OCI-LY7 (cell line): ENCODE measurements at regions of chr9 and their contacts with region 1.

Region 1: DNA sequence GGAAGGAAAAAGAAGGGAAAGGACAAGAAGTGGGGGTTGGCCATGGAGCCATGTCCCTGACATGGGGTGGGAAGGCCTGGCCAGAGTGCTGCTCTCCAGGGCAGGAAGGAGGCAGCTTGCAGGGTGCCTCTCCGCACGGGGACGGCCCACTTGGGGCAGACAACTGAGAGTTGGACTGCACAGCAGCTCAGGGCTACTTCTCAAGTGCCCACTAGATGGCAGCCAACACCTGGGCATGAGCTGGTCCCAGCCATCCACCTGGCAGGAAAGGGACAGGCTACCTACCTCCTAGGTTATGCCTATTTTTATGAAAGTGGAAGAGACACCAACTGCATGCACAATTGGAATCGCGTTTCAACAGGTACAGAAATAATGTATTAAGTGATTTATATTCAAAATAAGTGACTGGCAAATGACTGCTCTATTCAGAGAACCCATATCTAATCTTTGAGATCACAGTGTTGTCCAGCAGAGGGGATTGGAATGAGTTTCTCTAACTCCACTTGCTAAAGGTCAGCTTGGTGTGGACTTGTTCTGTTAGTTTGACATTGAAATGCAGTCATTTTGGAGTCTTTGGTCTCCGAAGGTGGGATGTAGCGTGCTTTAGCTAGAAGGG is 113.4 kb downstream of the SYK start:
- DNase-seq: peak; percentile 86
- H3K4me3 ChIP-seq: no peak overlapping the region
- H3K27ac ChIP-seq: no peak overlapping the region
- H3K4me1 ChIP-seq: peaks cover 27% of the 10 kb centered on the region
- CTCF ChIP-seq: peak; percentile 93

Region 2: GRCh38 chr9:90773617-90774016 is 141.4 kb before region 1 on chr9:
- CTCF ChIA-PET with region 1: no interaction called
- POLR2A ChIA-PET with region 1: no interaction called
- intact Hi-C with region 1: no loop called
- DNase-seq: peak; percentile 66
- H3K4me3 ChIP-seq: no peak overlapping the region
- H3K27ac ChIP-seq: peak overlapping the region; percentile 69
- H3K4me1 ChIP-seq: peaks cover 32% of the 10 kb centered on the region
- CTCF ChIP-seq: peak; percentile 78

Region 3: DNA sequence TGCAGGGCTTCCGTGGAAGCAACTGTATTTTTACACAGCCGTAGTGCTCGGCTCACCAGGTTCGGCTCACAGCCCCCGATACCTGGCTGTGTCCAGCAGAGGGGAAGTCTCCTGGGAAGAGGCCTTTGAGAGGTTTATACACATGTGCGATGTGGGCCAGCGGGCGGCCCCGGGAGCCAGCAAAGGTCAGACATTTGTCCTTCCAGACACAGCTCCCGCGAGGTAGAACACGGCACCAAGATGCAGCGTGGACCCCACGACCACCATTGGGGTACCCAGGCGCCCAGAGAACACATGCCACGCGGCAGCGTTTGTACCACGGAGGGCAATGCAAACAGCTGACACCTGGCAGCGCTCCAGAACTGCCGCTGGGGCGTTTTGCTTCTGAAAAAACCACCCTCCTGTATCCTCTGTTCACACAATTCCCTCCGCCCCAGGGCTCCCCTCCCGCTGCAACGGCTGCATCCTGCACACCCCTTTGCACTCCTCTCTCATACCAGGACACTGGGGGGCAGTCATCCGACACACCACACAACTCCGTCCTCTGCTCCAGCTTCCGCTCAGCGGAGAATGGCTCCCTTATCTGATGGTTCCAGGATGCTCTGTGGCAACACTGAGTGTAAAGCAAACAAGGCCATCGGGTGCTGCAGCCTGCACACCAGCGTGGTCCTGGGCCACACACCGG is 122.0 kb after region 1 on chr9:
- CTCF ChIA-PET with region 1: interaction called, 8 read pairs
- POLR2A ChIA-PET with region 1: no interaction called
- intact Hi-C with region 1: loop called (anchors 2 kb)
- DNase-seq: peak; percentile 72
- H3K4me3 ChIP-seq: no peak overlapping the region
- H3K27ac ChIP-seq: peak overlapping the region; percentile 83
- H3K4me1 ChIP-seq: peaks cover 46% of the 10 kb centered on the region
- CTCF ChIP-seq: peak; percentile 68

Region 4: GRCh38 chr9:91177661-91178280 is 262.8 kb after region 1 on chr9:
- CTCF ChIA-PET with region 1: no interaction called
- POLR2A ChIA-PET with region 1: no interaction called
- intact Hi-C with region 1: loop called (anchors 5 kb)
- DNase-seq: no peak
- H3K4me3 ChIP-seq: no peak overlapping the region
- H3K27ac ChIP-seq: no peak overlapping the region
- H3K4me1 ChIP-seq: peaks cover 40% of the 10 kb centered on the region
- CTCF ChIP-seq: no peak

Region 5: GRCh38 chr9:91681461-91682305 is 766.7 kb after region 1 on chr9:
- CTCF ChIA-PET with region 1: no interaction called
- POLR2A ChIA-PET with region 1: no interaction called
- intact Hi-C with region 1: loop called (anchors 2 kb)
- DNase-seq: peak; percentile 54
- H3K4me3 ChIP-seq: no peak overlapping the region
- H3K27ac ChIP-seq: no peak overlapping the region
- H3K4me1 ChIP-seq: no peaks in the 10 kb centered on the region
- CTCF ChIP-seq: peak; percentile 79